ENCODE measurements at regions of chr9 and their contacts with region 1.

Region 1: GRCh38 chr9:70340572-70340971 is 73.9 kb downstream of the KLF9 start:
- DNase-seq: peak in 2 of 9 experiments; percentile 22 to 47
- ATAC-seq: no peak
- H3K4me3 ChIP-seq: no peak overlapping the region
- H3K4me3 Mint-ChIP-seq: no peak overlapping the region
- H3K27ac ChIP-seq: no peak overlapping the region
- H3K27ac Mint-ChIP-seq: no peak overlapping the region
- H3K4me1 ChIP-seq: no peaks in the 10 kb centered on the region
- H3K4me1 Mint-ChIP-seq: peaks cover 2% of the 10 kb centered on the region
- H3K27me3 ChIP-seq: no peaks in the 10 kb centered on the region
- H3K27me3 Mint-ChIP-seq: no peaks in the 10 kb centered on the region
- CTCF ChIP-seq: peak; percentile 85

Region 2: DNA sequence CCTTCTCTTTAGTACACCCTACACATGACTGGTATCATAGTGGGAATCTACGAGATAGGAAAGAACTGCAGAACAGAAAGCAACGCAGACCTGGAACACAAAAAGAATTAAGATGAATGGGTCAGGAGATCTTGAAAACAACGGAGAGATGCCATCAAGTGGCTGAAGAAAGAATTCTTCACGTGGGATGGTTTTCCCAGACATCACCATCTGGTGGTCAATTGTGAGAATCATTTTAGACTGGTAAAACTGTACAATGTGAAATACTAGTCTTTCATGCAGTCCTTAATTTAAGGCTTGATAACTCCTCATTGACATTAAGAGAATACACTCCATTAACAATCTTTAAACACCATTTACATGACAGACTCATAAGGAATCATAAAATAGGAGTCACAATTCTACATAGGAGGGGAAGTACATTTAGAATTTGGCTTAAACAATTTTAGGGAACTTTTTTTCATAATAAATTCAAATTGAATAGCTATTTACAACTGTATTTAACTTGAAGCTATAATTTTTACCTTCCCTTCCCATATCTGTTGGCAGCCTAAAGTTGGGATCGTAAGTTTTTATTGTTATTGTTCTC is 909.3 kb after region 1 on chr9:
- CTCF ChIA-PET with region 1: no interaction called
- POLR2A ChIA-PET with region 1: no interaction called
- intact Hi-C with region 1: loop called in 1 of 2 experiments (anchors 10 kb)
- DNase-seq: peak in 2 of 9 experiments; percentile 7 to 15
- ATAC-seq: no peak
- H3K4me3 ChIP-seq: no peak overlapping the region
- H3K4me3 Mint-ChIP-seq: no peak overlapping the region
- H3K27ac ChIP-seq: no peak overlapping the region
- H3K27ac Mint-ChIP-seq: no peak overlapping the region
- H3K4me1 ChIP-seq: no peaks in the 10 kb centered on the region
- H3K4me1 Mint-ChIP-seq: no peaks in the 10 kb centered on the region
- H3K27me3 ChIP-seq: no peaks in the 10 kb centered on the region
- H3K27me3 Mint-ChIP-seq: peaks cover 6% of the 10 kb centered on the region
- CTCF ChIP-seq: no peak